Aorta (tissue), 5 donors: ENCODE measurements at regions of chr10 and their contacts with region 1.

Region 1: GRCh38 chr10:69123747-69124562 is at the start of gene VPS26A:
- DNase-seq: peak; percentile 99 to 100
- ATAC-seq: peak; percentile 100
- H3K4me3 ChIP-seq: peak within 1 kb of the TSS; percentile 70
- H3K27ac ChIP-seq: peak within 1 kb of the TSS; percentile 91 to 94
- H3K4me1 ChIP-seq: no peaks in the 10 kb centered on the region
- H3K27me3 ChIP-seq: no peaks in the 10 kb centered on the region
- total RNA-seq, gene VPS26A: 47.4 to 49.2 TPM

Region 2: GRCh38 chr10:69033256-69033655 is 90.7 kb before region 1 on chr10:
- intact Hi-C with region 1: no loop called
- DNase-seq: no peak
- ATAC-seq: no peak
- H3K4me3 ChIP-seq: no peak overlapping the region
- H3K27ac ChIP-seq: no peak overlapping the region
- H3K4me1 ChIP-seq: peaks cover 0 to 3% of the 10 kb centered on the region in 2 donors
- H3K27me3 ChIP-seq: no peaks in the 10 kb centered on the region

Region 3: GRCh38 chr10:69073026-69073425 is 50.9 kb before region 1 on chr10:
- intact Hi-C with region 1: no loop called
- DNase-seq: no peak
- ATAC-seq: no peak
- H3K4me3 ChIP-seq: no peak overlapping the region
- H3K27ac ChIP-seq: no peak overlapping the region
- H3K4me1 ChIP-seq: no peaks in the 10 kb centered on the region
- H3K27me3 ChIP-seq: no peaks in the 10 kb centered on the region

Region 4: GRCh38 chr10:69179743-69180524 is 56.0 kb after region 1 on chr10 and contains the start of gene SUPV3L1:
- intact Hi-C with region 1: loop called in 1 of 2 experiments (anchors 10 kb)
- DNase-seq: peak; percentile 95 to 96
- ATAC-seq: peak; percentile 99
- H3K4me3 ChIP-seq: peak within 1 kb of the TSS; percentile 46 to 95
- H3K27ac ChIP-seq: peak within 1 kb of the TSS in 1 of 2 donors; percentile 50
- H3K4me1 ChIP-seq: peaks cover 0 to 5% of the 10 kb centered on the region in 2 donors
- H3K27me3 ChIP-seq: no peaks in the 10 kb centered on the region
- total RNA-seq, gene SUPV3L1: 21.4 to 28.2 TPM